ENCODE measurements at regions of chr2 and their contacts with region 1.

Region 1: GRCh38 chr2:42102024-42102590 is 54.3 kb downstream of the PKDCC start:
- DNase-seq: peak; percentile 82
- ATAC-seq: peak; percentile 74
- H3K4me3 ChIP-seq: peak overlapping the region; percentile 47; the same call in 1 of the 2 replicates
- H3K27ac ChIP-seq: peak overlapping the region; percentile 94
- H3K4me1 ChIP-seq: peaks cover 81% of the 10 kb centered on the region
- H3K27me3 ChIP-seq: no peaks in the 10 kb centered on the region
- CTCF ChIP-seq: no peak
- EP300 ChIP-seq: peak; percentile 87 to 91
- POLR2A ChIP-seq: peak; percentile 71
- RAD21 ChIP-seq: no peak

Region 2: DNA sequence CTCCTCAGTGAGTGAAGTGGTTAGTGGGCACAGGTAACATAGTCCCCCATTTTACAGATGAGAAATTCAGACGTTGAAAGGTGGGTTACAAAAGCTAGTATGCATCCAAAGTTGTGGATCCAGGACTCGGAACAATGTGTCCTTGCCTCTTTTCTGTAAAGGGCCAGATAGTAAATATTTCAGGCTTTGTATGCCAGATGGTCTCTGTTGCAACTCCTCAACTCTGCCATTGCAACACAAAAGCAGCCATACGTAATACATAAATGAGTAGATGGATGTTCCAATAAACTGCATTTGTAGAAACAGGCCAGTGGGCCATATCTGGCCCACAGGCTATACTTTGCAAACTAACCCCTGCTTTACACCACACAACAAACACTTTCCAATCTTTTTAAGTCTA is 220.9 kb before region 1 on chr2:
- CTCF ChIA-PET with region 1: no interaction called
- POLR2A ChIA-PET with region 1: no interaction called
- RAD21 ChIA-PET with region 1: no interaction called
- SMC1A ChIA-PET with region 1: no interaction called
- in situ Hi-C with region 1: no loop called
- intact Hi-C with region 1: no loop called
- DNase-seq: no peak
- ATAC-seq: no peak
- H3K4me3 ChIP-seq: no peak overlapping the region
- H3K27ac ChIP-seq: no peak overlapping the region
- H3K4me1 ChIP-seq: no peaks in the 10 kb centered on the region
- H3K27me3 ChIP-seq: peaks cover 0 to 6% of the 10 kb centered on the region in 2 experiments; a peak in 3 of 4 replicates
- CTCF ChIP-seq: no peak
- EP300 ChIP-seq: no peak
- POLR2A ChIP-seq: no peak
- RAD21 ChIP-seq: no peak

Region 3: GRCh38 chr2:42117923-42118753 is 16.0 kb after region 1 on chr2:
- CTCF ChIA-PET with region 1: interaction called, 22 read pairs
- POLR2A ChIA-PET with region 1: interaction called, 16 read pairs
- RAD21 ChIA-PET with region 1: interaction called, 36 read pairs
- SMC1A ChIA-PET with region 1: interaction called, 87 read pairs
- in situ Hi-C with region 1: no loop called
- intact Hi-C with region 1: loop called (anchors 2 kb)
- DNase-seq: peak; percentile 56
- ATAC-seq: peak; percentile 91
- H3K4me3 ChIP-seq: peak overlapping the region; percentile 13; the same call in 1 of the 2 replicates
- H3K27ac ChIP-seq: peak overlapping the region; percentile 50
- H3K4me1 ChIP-seq: peaks cover 18% of the 10 kb centered on the region
- H3K27me3 ChIP-seq: no peaks in the 10 kb centered on the region
- CTCF ChIP-seq: no peak
- EP300 ChIP-seq: no peak; a peak in 1 of 4 replicates
- POLR2A ChIP-seq: no peak
- RAD21 ChIP-seq: no peak

Region 4: GRCh38 chr2:42127425-42128424 is 25.6 kb after region 1 on chr2:
- CTCF ChIA-PET with region 1: interaction called, 23 read pairs
- POLR2A ChIA-PET with region 1: interaction called, 25 read pairs
- RAD21 ChIA-PET with region 1: interaction called, 39 read pairs
- SMC1A ChIA-PET with region 1: interaction called, 87 read pairs
- in situ Hi-C with region 1: no loop called
- intact Hi-C with region 1: loop called (anchors 1 kb)
- DNase-seq: peak; percentile 83
- ATAC-seq: peak; percentile 77
- H3K4me3 ChIP-seq: peak overlapping the region; percentile 47
- H3K27ac ChIP-seq: peak overlapping the region; percentile 73
- H3K4me1 ChIP-seq: peaks cover 63% of the 10 kb centered on the region
- H3K27me3 ChIP-seq: no peaks in the 10 kb centered on the region
- CTCF ChIP-seq: no peak
- EP300 ChIP-seq: peak; percentile 69 to 70; a peak in 2 of 4 replicates
- POLR2A ChIP-seq: 0 out of 2 replicates have a peak, but pooled peaks have one; percentile 32
- RAD21 ChIP-seq: peak; percentile 28; the same call in 1 of the 2 replicates

Region 5: DNA sequence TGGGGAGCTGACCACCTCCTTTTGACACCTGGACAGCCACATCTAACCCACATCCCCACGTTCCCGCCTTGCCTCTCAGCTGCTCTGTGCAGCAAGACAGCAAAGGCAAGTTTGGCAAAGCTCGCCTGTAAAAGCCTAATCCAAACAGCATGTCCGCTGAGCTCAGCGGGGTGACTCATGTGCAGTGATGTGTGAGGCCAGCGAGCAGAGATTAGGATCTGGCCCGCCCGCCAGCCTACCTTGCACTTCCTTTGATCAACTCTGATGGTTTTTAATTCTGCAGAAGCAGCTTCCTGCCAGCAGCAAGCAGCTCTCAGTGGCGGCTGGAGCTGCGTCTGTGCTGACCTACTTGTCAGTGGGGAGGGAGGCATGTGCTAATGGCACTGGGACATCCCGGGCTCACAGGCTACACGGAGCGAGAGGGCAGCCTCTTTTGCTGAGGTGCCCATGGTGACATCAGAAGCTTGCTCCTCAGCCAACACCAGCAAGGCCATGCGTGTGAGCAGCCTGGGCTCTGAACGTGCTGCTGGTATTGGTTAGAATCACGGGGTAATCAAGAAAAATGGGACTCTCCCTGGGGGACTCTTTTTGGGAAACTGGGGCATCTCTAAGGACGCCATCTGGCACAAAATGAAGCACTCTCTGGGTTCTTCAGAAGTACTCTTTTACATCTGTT is 31.0 kb after region 1 on chr2:
- CTCF ChIA-PET with region 1: interaction called, 23 read pairs
- POLR2A ChIA-PET with region 1: interaction called, 25 read pairs
- RAD21 ChIA-PET with region 1: interaction called, 39 read pairs
- SMC1A ChIA-PET with region 1: interaction called, 87 read pairs
- in situ Hi-C with region 1: no loop called
- intact Hi-C with region 1: no loop called
- DNase-seq: peak; percentile 65
- ATAC-seq: peak; percentile 85
- H3K4me3 ChIP-seq: peak overlapping the region; percentile 18; the same call in 1 of the 2 replicates
- H3K27ac ChIP-seq: peak overlapping the region; percentile 9
- H3K4me1 ChIP-seq: peaks cover 50% of the 10 kb centered on the region
- H3K27me3 ChIP-seq: no peaks in the 10 kb centered on the region
- CTCF ChIP-seq: no peak
- EP300 ChIP-seq: no peak
- POLR2A ChIP-seq: peak; percentile 75
- RAD21 ChIP-seq: peak; percentile 11; the same call in 1 of the 2 replicates

Region 6: GRCh38 chr2:42141687-42142546 is 39.8 kb after region 1 on chr2:
- CTCF ChIA-PET with region 1: interaction called, 8 read pairs
- POLR2A ChIA-PET with region 1: no interaction called
- RAD21 ChIA-PET with region 1: interaction called, 4 read pairs
- SMC1A ChIA-PET with region 1: interaction called, 15 read pairs
- in situ Hi-C with region 1: no loop called
- intact Hi-C with region 1: no loop called
- DNase-seq: no peak
- ATAC-seq: peak; percentile 49
- H3K4me3 ChIP-seq: no peak overlapping the region
- H3K27ac ChIP-seq: no peak overlapping the region
- H3K4me1 ChIP-seq: 0 out of 2 replicates have a peak, but pooled peaks cover 6% of the 10 kb centered on the region
- H3K27me3 ChIP-seq: no peaks in the 10 kb centered on the region
- CTCF ChIP-seq: no peak
- EP300 ChIP-seq: no peak
- POLR2A ChIP-seq: no peak
- RAD21 ChIP-seq: no peak

Region 7: DNA sequence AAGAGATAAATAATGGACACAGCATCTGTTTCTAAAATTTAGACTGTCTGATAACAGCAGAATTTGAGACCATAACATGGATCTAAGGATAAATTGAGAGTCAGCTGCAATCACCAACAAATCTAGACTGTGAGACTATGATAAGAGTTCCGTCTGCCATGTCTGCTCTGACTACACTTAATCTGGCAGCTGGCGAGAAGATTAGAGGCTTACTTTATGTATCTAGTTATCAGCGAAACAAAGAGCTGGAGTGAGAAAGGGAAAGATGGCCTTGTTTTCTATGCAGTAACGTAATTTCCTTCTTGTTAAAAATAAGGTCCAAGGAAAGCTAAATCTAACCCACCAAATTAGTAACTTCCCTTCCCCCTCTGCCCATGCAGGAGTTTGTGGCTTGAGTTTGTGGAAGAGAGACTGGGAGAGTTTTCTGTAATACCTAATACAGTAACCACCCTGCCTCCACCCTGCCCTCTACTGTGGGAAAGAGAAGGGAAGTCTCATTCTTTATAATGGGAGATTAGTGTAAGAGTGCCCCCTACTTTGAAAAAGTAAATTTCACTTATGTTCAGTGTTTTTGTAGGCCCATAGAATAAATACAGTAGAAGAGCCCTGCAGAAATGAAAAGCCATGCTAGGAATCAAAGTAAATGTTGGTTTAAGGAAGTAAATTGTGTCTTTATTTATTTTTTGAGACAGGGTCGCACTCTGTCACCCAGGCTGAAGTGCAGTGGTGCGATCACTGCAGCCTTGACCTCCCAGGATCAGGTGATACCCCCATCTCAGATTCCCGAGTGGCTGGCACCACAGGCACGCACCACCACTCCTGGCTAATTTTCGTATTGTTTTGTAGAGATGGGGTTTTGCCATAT is 94.5 kb after region 1 on chr2:
- CTCF ChIA-PET with region 1: interaction called, 160 read pairs
- POLR2A ChIA-PET with region 1: interaction called, 6 read pairs
- RAD21 ChIA-PET with region 1: interaction called, 64 read pairs
- SMC1A ChIA-PET with region 1: interaction called, 95 read pairs
- in situ Hi-C with region 1: loop called (anchors 5 kb)
- intact Hi-C with region 1: no loop called
- DNase-seq: peak; percentile 11
- ATAC-seq: peak; percentile 78
- H3K4me3 ChIP-seq: no peak overlapping the region
- H3K27ac ChIP-seq: no peak overlapping the region
- H3K4me1 ChIP-seq: peaks cover 19% of the 10 kb centered on the region; the same call in 1 of the 2 replicates
- H3K27me3 ChIP-seq: no peaks in the 10 kb centered on the region
- CTCF ChIP-seq: peak; percentile 48 to 76 (median 52); a peak in 5 of 6 replicates
- EP300 ChIP-seq: no peak
- POLR2A ChIP-seq: no peak
- RAD21 ChIP-seq: peak; percentile 68

Measured in GM12878 (cell line).